Left cardiac atrium (tissue), 4 donors: ENCODE measurements at regions of chr6 and their contacts with region 1.

Region 1: GRCh38 chr6:138765896-138766655 is 7.5 kb upstream of the CCDC28A start:
- DNase-seq: no peak
- ATAC-seq: no peak

Region 2: GRCh38 chr6:138287144-138287955 is 478.7 kb before region 1 on chr6:
- intact Hi-C with region 1: loop called in 1 of 2 experiments (anchors 10 kb)
- DNase-seq: no peak
- ATAC-seq: peak; percentile 38 to 47

Region 3: GRCh38 chr6:138588805-138589434 is 177.2 kb before region 1 on chr6:
- intact Hi-C with region 1: loop called (anchors 2 to 5 kb)
- DNase-seq: peak; percentile 49
- ATAC-seq: peak; percentile 53 to 67

Region 4: DNA sequence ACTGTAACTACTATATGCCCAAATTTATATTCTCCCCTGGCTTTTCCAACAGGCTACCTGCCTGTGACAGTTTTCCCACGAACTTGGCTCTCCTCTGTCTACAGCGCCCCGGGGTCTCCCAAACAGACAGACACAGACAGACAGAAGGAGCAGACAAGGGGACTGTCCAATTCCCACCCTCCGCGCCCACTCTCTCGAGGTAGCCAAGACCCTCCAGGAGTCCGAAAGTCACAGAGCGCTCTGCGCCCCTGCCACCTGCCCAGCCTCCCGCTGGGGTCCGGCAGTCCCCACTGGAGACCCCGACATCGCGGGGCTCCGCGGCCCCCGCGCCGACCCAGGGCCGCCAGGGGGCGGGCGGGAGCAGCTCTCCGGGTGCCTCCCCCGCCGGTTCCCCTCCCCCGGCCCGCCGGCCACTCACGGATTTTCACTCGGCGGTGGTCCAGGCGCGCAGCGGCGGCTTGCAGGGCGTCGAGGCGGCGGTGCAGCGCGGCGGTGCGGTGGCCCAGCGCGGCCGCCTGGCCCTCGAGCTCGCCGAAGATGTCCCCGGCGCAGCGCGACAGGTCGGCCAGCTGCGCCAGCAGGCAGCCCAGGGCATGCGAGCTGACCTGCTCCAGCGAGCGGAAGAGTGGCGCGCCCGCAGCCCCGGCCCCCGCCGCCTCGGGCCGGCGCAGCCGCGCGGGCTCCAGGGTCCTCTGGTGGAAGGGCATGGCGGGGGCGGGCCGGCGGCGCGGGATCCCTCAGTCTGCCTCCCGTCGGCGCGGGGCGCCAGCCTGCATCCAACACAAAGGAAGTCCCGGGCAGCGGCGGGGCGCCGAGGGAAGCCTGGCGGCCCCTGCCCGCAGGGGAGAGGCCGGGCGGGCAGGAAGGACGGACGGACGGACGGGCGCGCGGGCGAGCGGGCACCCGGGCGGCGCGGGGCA is 73.8 kb before region 1 on chr6:
- intact Hi-C with region 1: loop called (anchors 2 to 10 kb)
- DNase-seq: peak; percentile 82
- ATAC-seq: peak; percentile 82 to 87